ENCODE measurements at regions of chr19 and their contacts with region 1.

Region 1: DNA sequence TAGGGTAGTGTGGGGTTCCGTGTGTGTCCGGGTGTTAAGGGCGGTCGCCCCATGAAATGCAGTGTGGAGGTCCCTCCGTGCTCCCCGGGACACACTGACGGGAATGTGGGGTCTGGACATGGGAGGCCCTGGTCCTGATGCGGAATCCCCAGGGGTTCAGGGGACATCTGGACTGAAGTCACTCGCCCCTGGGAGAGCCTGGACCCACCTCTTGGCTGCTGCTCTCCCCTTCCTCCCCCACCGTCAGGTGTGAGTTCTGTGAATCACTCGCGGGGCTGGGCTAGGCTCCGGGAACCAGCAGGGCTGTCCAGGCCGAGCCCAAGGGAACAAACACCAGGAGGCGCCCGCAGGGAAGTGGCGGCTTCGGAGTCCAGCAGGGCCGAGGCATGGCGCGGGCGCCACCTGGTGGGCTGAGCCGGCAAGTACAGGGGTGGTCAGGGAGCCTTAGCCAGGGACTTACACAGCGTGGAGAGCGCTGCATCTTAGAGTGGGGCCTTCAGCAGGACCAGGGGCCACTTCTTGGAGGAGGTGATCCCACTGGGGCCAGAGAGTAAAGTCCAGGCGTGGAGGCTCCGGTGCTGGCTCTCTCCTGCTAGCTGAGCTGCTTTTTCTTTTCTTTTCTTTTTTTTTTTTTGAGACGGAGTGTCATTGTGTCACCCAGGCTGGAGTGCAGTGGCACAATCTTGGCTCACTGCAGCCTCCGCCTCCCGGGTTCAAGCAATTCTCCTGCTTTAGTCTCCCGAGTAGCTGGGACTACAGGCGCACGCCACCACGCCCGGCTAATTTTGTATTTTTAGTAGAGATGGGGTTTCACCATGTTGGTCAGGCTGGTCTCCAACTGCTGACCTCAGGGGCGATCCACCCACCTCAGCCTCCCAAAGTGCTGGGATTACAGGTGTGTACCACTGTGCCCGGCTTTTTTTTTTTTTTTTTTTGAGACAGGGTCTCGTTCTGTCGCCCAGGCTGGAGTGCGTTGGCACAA is 20.1 kb downstream of the WTIP start:
- DNase-seq: peak; percentile 95 to 99
- ATAC-seq: peak; percentile 92
- H3K4me3 ChIP-seq: no peak overlapping the region
- H3K27ac ChIP-seq: peak overlapping the region in 1 of 2 donors; percentile 43
- H3K4me1 ChIP-seq: no peaks in the 10 kb centered on the region
- H3K27me3 ChIP-seq: no peaks in the 10 kb centered on the region

Region 2: DNA sequence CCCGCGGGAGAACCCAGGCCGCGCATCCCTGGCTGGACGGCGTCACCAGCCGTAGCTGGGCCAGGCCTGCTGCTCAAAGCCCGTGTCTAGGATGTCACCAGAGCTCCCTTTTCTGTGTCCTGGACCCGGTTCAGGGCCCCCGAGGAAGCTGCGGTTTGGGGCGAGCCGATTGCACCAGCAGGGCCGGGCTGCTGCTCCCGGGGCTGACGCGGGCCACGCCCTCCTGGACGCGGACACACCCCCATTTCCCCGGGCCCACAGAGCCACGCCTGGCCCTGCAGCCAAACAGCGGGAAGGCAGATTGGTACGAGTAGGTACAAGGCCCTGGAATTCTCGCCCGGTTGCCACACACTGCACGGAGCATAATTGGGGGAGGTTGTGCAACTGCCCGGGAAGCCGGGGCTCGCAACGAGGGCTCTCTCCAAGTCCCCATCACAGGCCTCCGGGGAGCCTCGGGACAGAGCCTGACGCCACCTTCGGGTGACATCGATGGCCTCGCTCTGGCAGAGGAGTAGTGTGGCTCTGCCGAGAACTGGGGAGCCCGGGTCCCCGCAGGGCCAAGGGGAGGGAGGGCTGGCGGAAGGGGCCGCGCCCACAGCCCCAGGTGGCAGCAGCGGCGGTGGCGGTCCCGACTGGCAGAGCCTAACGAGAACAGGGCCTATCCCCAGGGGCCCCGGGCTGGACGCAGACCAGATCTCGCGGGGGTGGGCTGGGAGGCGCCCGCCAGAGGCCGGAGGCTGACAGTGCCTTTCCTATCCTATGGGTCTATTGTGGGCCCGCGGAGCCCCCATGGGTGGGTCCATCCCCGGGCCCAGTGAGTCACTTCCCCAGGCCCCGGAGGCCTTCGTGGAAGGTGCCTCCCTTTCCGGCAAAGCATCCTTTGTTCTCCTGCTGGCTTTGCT is 681.5 kb before region 1 on chr19:
- intact Hi-C with region 1: loop called in 1 of 2 experiments (anchors 10 kb)
- DNase-seq: peak; percentile 92 to 93
- ATAC-seq: peak; percentile 85
- H3K4me3 ChIP-seq: peak overlapping the region in 1 of 2 donors; percentile 27
- H3K27ac ChIP-seq: no peak overlapping the region
- H3K4me1 ChIP-seq: no peaks in the 10 kb centered on the region
- H3K27me3 ChIP-seq: no peaks in the 10 kb centered on the region

Region 3: DNA sequence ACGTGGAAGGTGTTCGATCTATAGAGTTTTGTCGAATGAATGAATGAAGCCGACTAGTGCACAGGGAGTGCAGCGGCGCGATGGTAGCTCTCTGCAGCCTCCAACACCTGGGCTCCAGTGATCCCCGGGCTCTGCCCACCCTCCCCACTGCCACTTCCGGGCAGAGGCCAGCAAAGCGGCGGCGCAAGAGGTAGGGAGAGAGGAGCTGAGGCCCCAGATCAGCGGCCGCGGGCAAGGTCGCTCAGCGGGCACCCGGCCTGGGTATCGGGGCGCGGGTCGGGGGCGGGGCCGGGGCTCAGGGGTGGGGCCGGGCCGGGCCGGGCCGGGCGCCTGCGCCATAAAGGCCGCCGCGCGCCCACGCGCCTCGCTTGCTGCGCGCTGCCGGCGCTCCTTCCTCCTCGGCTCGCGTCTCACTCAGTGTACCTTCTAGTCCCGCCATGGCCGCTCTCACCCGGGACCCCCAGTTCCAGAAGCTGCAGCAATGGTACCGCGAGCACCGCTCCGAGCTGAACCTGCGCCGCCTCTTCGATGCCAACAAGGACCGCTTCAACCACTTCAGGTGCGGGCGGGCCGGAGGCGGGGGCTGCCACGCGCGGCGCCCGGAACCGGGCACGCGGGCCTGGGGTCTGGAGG is 136.7 kb before region 1 on chr19 and contains the start of gene GPI:
- intact Hi-C with region 1: loop called (anchors 2 to 5 kb)
- DNase-seq: peak; percentile 76 to 87
- ATAC-seq: peak; percentile 84
- H3K4me3 ChIP-seq: peak within 1 kb of the TSS; percentile 36 to 95
- H3K27ac ChIP-seq: no peak within 1 kb of the TSS
- H3K4me1 ChIP-seq: peaks cover 0 to 2% of the 10 kb centered on the region in 2 donors
- H3K27me3 ChIP-seq: no peaks in the 10 kb centered on the region
- total RNA-seq, gene GPI: 131 to 197 TPM

Region 4: GRCh38 chr19:34404109-34404897 is 97.3 kb before region 1 on chr19 and contains the start of gene PDCD2L:
- intact Hi-C with region 1: loop called (anchors 5 kb)
- DNase-seq: peak; percentile 93 to 98
- ATAC-seq: peak; percentile 93
- H3K4me3 ChIP-seq: peak within 1 kb of the TSS; percentile 59 to 86
- H3K27ac ChIP-seq: no peak within 1 kb of the TSS
- H3K4me1 ChIP-seq: no peaks in the 10 kb centered on the region
- H3K27me3 ChIP-seq: no peaks in the 10 kb centered on the region
- total RNA-seq, gene PDCD2L: 5.6 to 6.0 TPM

Region 5: GRCh38 chr19:34428549-34429285 is 72.9 kb before region 1 on chr19:
- intact Hi-C with region 1: loop called in 1 of 2 experiments (anchors 5 kb)
- DNase-seq: peak; percentile 60 to 85
- ATAC-seq: peak; percentile 72
- H3K4me3 ChIP-seq: peak overlapping the region; percentile 83 to 94
- H3K27ac ChIP-seq: peak overlapping the region; percentile 72 to 94
- H3K4me1 ChIP-seq: peaks cover under 1 to 2% of the 10 kb centered on the region in 2 donors
- H3K27me3 ChIP-seq: peaks cover 0 to 2% of the 10 kb centered on the region in 2 donors

Region 6: DNA sequence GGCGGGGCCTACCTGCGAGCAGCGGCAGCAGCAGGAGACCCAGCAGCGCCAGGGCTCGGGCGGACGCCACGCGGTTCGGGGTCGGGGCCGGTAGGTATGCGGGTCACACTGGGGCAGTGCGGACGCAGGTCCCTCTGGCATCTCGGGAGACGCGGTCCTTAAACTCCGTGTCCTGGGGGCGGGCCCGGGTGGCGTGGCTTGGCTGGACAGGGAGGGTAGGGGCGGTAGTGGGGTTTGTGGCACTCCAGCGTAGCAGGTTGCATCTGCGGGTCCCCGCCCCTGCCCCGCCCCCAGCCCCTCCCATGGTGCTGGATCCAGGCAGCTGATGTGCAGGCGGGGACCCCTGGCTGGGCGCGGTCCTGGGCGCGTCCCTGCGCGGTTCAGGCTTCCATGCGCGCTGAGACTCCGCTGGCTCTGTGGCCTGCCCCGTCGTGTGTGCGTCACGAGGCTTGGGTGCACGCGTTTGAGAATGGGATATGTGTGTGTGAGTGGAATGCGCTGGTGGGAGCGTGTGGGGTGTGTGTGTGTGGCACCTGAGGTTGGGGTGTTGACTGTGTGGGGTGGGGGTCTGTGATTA is 76.0 kb after region 1 on chr19:
- intact Hi-C with region 1: no loop called
- DNase-seq: no peak
- ATAC-seq: no peak
- H3K4me3 ChIP-seq: no peak overlapping the region
- H3K27ac ChIP-seq: no peak overlapping the region
- H3K4me1 ChIP-seq: no peaks in the 10 kb centered on the region
- H3K27me3 ChIP-seq: no peaks in the 10 kb centered on the region

Measured in aorta (tissue), 5 donors.